AG04449 (cell line): ENCODE measurements at regions of chr7 and their contacts with region 1.

Region 1: DNA sequence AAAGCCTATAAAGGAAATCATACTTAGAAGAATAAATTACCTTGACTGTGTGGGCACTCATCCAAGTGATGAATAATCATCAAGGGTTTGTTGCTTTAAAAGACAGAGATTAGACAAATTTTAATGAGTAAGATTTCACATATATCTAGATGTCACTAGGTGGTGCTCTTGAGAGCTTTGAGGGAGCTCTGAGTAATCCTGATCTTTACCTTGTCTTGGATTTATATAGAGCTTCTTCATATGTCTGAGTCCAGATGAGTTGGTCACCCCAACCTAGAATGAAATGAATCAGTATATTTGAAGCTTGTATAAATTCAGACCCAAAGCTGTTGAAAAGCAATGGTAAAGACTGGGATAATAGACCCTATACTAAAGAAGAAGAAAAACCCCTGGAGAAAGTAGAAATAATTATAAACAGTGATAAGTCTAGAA is 3.7 kb downstream of the AGR2 start:
- DNase-seq: peak; percentile 28
- H3K4me3 ChIP-seq: no peak overlapping the region
- CTCF ChIP-seq: peak; percentile 42

Region 2: DNA sequence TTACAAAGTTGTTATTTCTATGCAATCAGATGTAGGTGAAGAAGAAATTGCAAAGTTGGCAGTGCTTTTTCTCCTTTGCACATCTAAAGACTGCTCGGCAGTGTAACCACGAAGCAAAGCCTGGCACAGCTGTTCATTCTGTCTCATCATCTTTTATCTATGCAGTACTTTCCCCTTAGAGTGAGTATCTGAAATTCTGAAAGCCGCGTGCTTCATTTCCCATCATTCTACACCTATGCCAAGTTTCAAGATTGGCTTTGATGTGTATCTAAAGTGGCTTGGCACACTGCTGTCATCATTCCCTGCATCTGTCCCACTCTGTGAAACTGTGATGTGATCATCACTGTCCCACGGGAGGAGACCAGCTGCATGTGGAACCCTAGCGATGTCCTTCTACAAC is 350.8 kb before region 1 on chr7:
- CTCF ChIA-PET with region 1: no interaction called
- POLR2A ChIA-PET with region 1: no interaction called
- DNase-seq: no peak
- H3K4me3 ChIP-seq: no peak overlapping the region
- CTCF ChIP-seq: no peak

Region 3: DNA sequence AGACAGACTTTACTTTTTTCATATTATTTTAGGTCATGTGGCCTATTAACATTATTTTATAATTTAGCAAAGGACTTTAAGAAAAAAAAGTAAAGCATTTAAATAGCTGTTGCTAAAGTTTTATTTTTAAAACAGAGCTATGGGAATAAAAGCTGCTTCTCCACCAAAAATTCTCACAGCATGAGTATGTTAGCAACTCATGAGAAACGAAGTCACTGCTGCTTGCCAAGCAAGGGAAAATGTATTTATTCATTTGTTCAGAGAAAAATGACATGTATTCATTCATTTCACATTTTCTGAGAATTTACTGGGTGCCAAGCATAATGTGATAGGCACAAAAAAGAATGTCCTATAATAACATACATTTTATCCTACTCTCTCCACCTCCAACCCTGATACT is 269.4 kb before region 1 on chr7:
- CTCF ChIA-PET with region 1: no interaction called
- POLR2A ChIA-PET with region 1: no interaction called
- DNase-seq: no peak
- H3K4me3 ChIP-seq: no peak overlapping the region
- CTCF ChIP-seq: no peak

Region 4: DNA sequence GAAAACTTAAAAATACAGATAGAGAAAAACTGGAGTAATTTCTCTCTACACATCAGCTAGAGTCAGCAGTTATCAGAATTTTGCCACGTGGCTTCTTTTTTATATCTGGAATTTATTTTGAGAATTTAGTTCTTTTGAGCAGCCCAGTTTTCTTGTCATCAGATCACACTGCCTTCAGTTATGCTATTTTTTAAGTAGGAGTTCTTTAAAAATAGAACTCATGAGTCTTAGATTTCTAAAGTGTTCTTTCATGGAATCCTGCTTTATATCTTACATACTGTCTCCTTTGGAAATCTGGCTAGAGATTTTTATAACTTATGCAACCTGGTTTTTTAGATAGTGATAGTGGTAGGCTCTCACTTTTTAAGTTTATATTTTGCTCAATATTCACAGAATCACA is 20.5 kb before region 1 on chr7:
- CTCF ChIA-PET with region 1: interaction called, 40 read pairs
- POLR2A ChIA-PET with region 1: no interaction called
- DNase-seq: no peak
- H3K4me3 ChIP-seq: no peak overlapping the region
- CTCF ChIP-seq: no peak

Region 5: DNA sequence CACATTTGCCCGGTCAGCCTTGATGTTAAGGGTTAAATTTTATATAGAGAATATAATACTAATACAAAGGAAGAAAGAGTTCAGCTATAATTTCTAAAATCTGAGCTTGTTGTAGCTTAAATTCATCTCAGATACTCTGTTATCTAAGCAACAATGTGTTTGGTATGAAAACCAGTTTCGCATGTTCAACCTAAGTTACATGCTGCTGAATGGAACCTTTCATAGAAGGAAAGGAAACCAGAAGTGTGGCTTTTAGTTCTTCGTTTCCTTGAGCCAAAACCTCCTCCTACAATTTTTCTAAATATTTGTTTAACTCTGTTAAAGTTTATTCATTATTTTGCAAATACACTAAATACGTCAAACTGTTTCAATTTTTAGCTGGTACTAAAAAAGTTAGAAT is 14.9 kb before region 1 on chr7:
- CTCF ChIA-PET with region 1: interaction called, 40 read pairs
- POLR2A ChIA-PET with region 1: no interaction called
- DNase-seq: no peak
- H3K4me3 ChIP-seq: no peak overlapping the region
- CTCF ChIP-seq: no peak

Region 6: DNA sequence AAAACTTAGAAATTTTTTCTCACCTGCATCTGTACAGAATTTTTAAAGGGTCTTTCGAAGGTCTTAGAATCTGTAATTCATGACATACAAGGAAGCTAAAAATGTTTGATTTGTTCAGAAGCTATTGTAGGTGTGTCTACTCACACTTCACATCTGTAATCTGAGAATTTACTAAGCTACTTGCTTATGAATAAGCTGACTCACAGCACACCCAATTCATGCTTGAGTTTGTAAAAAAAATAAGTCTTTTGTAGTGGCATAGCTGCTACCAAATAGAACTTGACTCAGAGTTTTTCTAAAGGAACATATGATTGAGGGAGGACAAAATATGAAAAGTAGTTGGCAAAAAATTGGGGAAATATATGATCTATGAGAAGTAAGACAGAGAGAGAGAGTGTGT is 16.4 kb after region 1 on chr7:
- CTCF ChIA-PET with region 1: interaction called, 14 read pairs
- POLR2A ChIA-PET with region 1: no interaction called
- DNase-seq: no peak
- H3K4me3 ChIP-seq: no peak overlapping the region
- CTCF ChIP-seq: no peak

Region 7: DNA sequence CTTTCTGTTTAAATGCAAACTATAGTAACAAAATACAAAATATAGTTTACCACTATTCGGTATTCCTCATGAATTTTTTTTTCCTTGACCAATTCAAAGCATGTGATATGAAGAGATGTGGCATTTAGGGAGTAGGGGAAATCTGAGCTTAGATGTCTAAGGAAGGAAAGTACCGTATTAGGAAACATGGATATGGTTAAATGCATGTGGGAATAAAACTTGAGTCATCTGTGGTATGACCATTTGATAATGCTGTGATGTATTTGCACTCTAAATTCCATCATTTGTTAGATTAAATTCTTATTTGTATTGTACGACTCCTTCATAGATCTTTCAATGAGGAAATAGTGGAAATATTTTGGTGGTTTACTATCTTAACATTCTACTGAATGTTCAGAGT is 517.0 kb after region 1 on chr7:
- CTCF ChIA-PET with region 1: no interaction called
- POLR2A ChIA-PET with region 1: no interaction called
- DNase-seq: peak; percentile 45
- H3K4me3 ChIP-seq: no peak overlapping the region
- CTCF ChIP-seq: no peak